Uterus (tissue), 4 donors: ENCODE measurements at regions of chr22 and their contacts with region 1.

Region 1: DNA sequence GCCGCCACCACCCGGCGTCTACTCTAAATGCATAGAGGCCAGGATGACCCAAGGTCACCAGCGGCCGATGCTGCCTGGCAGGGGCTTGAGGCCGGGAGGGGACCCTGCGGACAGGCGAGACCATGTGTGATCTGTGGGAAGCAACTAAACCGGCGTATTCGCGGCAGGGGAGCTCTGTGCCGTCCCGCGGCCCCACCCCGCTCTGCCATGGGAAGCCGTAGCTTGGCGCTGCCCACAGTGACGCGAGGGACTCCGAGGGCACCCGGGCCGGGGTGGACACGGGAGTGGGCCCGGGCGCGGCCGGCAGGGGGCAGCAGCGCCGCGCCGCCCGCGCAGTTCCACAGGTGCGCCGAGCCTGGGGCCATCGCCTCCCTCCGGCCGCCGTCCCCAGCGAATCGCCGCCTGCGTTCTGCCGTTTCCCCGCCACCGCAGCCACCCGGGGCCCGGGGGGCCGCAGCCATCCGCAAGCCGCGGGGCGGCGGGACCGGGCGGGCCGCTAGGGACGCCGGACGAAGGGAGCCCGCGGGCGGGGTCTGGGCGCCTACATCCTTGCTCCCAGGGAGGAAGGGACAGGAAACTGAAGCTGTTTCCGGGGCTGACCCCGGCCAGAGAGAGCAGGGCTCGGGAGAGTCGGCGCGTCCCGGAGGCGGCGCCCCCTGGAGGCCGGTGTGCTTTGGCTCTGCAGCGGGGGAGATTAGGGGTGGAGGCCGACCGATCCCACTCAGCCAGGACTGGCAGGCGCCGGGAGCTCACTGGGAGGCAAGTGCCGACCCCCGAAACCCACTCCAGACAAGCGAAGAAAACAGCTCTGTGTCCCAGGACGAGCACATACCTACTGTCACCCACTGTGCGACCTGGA is 12.5 kb upstream of the HDHD5 start:
- DNase-seq: peak; percentile 84 to 85
- H3K4me3 ChIP-seq: peak overlapping the region; percentile 59 to 75
- H3K27ac ChIP-seq: peak overlapping the region; percentile 93 to 94
- H3K4me1 ChIP-seq: no peaks in the 10 kb centered on the region
- H3K27me3 ChIP-seq: no peaks in the 10 kb centered on the region
- CTCF ChIP-seq: peak; percentile 70 to 89 (median 84)
- POLR2A ChIP-seq: peak in 1 of 2 donors; percentile 65

Region 2: DNA sequence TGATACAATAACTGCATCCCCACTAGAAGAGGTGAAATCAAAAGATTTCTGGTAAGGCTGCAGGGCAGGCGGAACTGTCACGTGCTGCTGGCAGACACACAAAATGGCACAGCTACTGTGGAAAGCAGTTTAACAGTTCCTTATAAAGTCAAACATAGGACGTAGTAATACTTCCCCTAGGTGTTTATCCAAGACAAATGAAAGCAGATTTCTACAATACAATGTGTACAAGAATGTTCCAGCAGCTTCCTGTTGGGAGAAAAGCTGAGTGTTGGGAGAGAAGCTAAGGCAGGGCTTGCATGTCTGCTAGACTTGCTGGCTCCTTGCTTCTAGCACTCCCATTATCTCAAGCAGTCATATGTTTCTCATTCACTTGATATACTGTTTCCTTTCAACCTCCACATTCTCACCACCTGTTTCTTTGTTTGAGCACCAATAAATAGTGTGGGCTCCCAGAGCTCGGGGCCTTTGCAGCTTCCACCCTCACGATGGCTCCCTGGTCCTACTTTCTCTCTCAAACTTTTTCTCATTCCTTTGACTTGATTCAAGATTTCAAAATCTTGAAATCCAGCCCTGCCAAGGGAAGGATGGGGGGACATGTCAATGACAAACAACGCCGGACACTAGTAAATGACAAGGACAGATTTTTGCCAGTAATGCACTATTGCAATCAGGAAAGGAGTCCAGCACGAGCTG is 108.0 kb before region 1 on chr22:
- intact Hi-C with region 1: no loop called
- DNase-seq: peak in 1 of 2 donors; percentile 60
- H3K4me3 ChIP-seq: no peak overlapping the region
- H3K27ac ChIP-seq: peak overlapping the region; percentile 50 to 61
- H3K4me1 ChIP-seq: no peaks in the 10 kb centered on the region
- H3K27me3 ChIP-seq: no peaks in the 10 kb centered on the region
- CTCF ChIP-seq: no peak
- POLR2A ChIP-seq: peak in 1 of 2 donors; percentile 8

Region 3: DNA sequence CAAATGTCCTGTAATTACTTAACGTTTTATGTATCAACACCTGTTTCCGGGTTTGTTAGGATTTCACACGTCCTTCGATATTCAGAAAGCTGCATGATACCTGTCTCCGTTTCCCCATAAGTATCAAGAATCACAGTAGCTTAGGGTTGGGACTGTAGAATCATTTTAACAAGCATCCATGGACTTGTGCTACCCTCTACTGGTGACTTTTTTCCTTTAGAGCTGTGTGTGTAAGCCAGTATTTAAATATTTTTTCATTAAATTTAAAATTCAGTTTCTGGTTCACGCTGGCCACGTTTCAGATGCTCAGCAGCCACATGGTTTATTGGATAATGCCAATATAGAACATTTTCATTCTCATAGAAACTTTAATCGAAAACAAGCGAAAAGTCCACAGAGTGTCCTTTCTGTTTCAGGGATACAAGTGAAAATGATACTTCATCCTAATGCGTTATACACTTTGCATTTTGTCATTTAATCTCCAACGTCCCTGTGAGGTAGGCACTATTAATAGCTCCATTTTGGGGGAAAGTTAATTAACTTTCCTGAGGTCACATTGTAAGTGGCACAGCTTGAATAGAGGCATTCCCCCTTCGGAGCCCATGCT is 330.2 kb after region 1 on chr22:
- intact Hi-C with region 1: loop called (anchors 5 kb)
- DNase-seq: peak in 1 of 2 donors; percentile 20
- H3K4me3 ChIP-seq: no peak overlapping the region
- H3K27ac ChIP-seq: no peak overlapping the region
- H3K4me1 ChIP-seq: no peaks in the 10 kb centered on the region
- H3K27me3 ChIP-seq: no peaks in the 10 kb centered on the region
- CTCF ChIP-seq: peak; percentile 37 to 79 (median 56)
- POLR2A ChIP-seq: no peak